A549 (cell line): ENCODE measurements at regions of chr15 and their contacts with region 1.

Region 1: GRCh38 chr15:57340682-57341259 is 35.5 kb upstream of the CGNL1 start:
- DNase-seq: peak; percentile 50 to 76
- ATAC-seq: peak; percentile 76 to 88; a peak in 5 of 6 replicates
- H3K4me3 ChIP-seq: no peak overlapping the region
- H3K27ac ChIP-seq: no peak overlapping the region
- H3K4me1 ChIP-seq: 0 out of 3 replicates have a peak, but pooled peaks cover 4% of the 10 kb centered on the region
- CTCF ChIP-seq: peak; percentile 99
- EP300 ChIP-seq: no peak
- POLR2A ChIP-seq: no peak
- RAD21 ChIP-seq: peak; percentile 100

Region 2: GRCh38 chr15:57356636-57357035 is 15.9 kb after region 1 on chr15:
- CTCF ChIA-PET with region 1: interaction called, 111 read pairs
- POLR2A ChIA-PET with region 1: no interaction called
- DNase-seq: no peak
- ATAC-seq: peak in 1 of 2 experiments; percentile 40; a peak in 2 of 6 replicates
- H3K4me3 ChIP-seq: no peak overlapping the region
- H3K27ac ChIP-seq: no peak overlapping the region
- H3K4me1 ChIP-seq: no peaks in the 10 kb centered on the region
- CTCF ChIP-seq: no peak
- EP300 ChIP-seq: no peak
- POLR2A ChIP-seq: no peak
- RAD21 ChIP-seq: no peak

Region 3: DNA sequence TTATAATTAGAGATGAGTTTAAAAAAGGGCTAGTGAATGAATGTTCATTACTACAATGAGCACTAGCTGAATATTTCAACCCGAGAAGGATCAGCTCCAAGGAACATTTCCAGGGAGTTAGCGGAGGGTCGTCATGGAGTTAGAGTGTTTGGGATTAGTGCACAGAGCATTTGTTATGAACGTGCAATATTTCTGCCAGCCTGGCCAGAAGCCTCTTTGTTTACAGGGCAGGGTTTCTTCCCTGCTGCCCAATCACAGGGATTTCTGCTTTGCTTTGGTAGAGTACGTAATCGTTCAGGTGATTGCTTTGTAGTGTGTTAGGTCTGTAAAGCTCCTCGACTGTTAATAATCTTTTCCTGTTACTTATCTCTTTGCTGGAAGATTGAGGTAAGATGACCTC is 41.4 kb after region 1 on chr15:
- CTCF ChIA-PET with region 1: interaction called, 21 read pairs
- POLR2A ChIA-PET with region 1: no interaction called
- DNase-seq: no peak
- ATAC-seq: no peak
- H3K4me3 ChIP-seq: no peak overlapping the region
- H3K27ac ChIP-seq: no peak overlapping the region
- H3K4me1 ChIP-seq: peaks cover 20% of the 10 kb centered on the region
- CTCF ChIP-seq: no peak
- EP300 ChIP-seq: no peak
- POLR2A ChIP-seq: no peak
- RAD21 ChIP-seq: no peak

Region 4: DNA sequence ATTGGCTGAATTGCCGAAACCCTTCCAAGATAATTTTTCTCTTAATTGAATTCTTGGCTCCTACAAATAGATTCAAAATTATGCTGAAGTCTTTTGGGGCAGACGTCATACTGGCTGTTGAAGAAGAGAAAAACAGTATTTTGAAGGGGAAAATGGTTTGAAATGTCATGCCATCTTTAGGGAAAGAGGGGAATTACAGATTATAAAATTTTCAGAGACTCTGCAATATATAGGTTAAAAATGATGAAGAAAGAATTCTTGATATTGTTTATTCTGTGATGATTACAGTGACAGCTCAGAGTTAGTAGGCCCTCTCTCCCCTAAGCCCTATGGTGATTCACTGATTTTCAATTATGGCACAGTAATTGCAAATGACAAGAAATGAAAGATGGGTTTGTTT is 121.6 kb after region 1 on chr15:
- CTCF ChIA-PET with region 1: interaction called, 39 read pairs
- POLR2A ChIA-PET with region 1: no interaction called
- DNase-seq: no peak
- ATAC-seq: peak; percentile 33 to 51; a peak in 3 of 6 replicates
- H3K4me3 ChIP-seq: no peak overlapping the region
- H3K27ac ChIP-seq: no peak overlapping the region
- H3K4me1 ChIP-seq: 0 out of 3 replicates have a peak, but pooled peaks cover 4% of the 10 kb centered on the region
- CTCF ChIP-seq: peak; percentile 42
- EP300 ChIP-seq: no peak
- POLR2A ChIP-seq: no peak
- RAD21 ChIP-seq: peak; percentile 54 to 57

Region 5: GRCh38 chr15:57505949-57506391 is 165.2 kb after region 1 on chr15:
- CTCF ChIA-PET with region 1: interaction called, 36 read pairs
- POLR2A ChIA-PET with region 1: no interaction called
- DNase-seq: peak in 1 of 2 experiments; percentile 39
- ATAC-seq: peak in 1 of 2 experiments; percentile 7; a peak in 2 of 6 replicates
- H3K4me3 ChIP-seq: no peak overlapping the region
- H3K27ac ChIP-seq: peak overlapping the region; percentile 41 to 64; a peak in 5 of 6 replicates
- H3K4me1 ChIP-seq: peaks cover 46% of the 10 kb centered on the region
- CTCF ChIP-seq: no peak
- EP300 ChIP-seq: no peak
- POLR2A ChIP-seq: no peak
- RAD21 ChIP-seq: no peak